A673 (cell line): ENCODE measurements at regions of chr2 and their contacts with region 1.

Region 1: GRCh38 chr2:12716282-12717190 is at the start of gene TRIB2:
- DNase-seq: peak; percentile 95
- H3K4me3 ChIP-seq: peak within 1 kb of the TSS; percentile 87
- H3K27ac ChIP-seq: peak within 1 kb of the TSS; percentile 91
- H3K4me1 ChIP-seq: peaks cover 31% of the 10 kb centered on the region
- H3K27me3 ChIP-seq: no peaks in the 10 kb centered on the region
- CTCF ChIP-seq: 0 out of 2 replicates have a peak, but pooled peaks have one; percentile 10
- total RNA-seq, gene TRIB2: 92.3 and 100.0 TPM in 2 replicates

Region 2: GRCh38 chr2:11829947-11830707 is 886.4 kb before region 1 on chr2:
- CTCF ChIA-PET with region 1: interaction called, 13 read pairs
- POLR2A ChIA-PET with region 1: no interaction called
- intact Hi-C with region 1: loop called (anchors 1 kb)
- DNase-seq: peak; percentile 99
- H3K4me3 ChIP-seq: peak overlapping the region; percentile 37
- H3K27ac ChIP-seq: peak overlapping the region; percentile 99
- H3K4me1 ChIP-seq: peaks cover 42% of the 10 kb centered on the region
- H3K27me3 ChIP-seq: no peaks in the 10 kb centered on the region
- CTCF ChIP-seq: peak; percentile 67

Region 3: DNA sequence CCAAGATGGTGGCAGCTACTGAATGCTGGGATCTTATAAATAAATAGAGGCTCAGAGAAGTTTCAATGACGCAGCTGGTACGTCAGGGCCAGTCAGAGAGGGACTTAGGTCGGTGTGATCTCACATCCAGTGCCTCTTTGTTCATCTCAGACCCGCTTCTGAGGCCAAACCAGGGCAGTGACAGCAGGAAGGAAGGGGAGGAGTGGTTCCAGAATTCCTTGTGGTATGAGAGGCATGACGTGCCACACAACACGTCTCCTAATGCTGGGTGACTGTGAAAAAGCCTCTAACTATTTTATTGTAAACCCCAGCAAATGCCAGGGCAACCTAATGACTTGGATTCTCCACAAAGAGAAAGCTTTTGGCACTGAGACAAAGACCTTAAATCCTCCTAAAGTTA is 546.8 kb before region 1 on chr2:
- CTCF ChIA-PET with region 1: no interaction called
- POLR2A ChIA-PET with region 1: no interaction called
- intact Hi-C with region 1: loop called (anchors 5 kb)
- DNase-seq: peak; percentile 78
- H3K4me3 ChIP-seq: no peak overlapping the region
- H3K27ac ChIP-seq: peak overlapping the region; percentile 88
- H3K4me1 ChIP-seq: peaks cover 21% of the 10 kb centered on the region
- H3K27me3 ChIP-seq: no peaks in the 10 kb centered on the region
- CTCF ChIP-seq: no peak

Region 4: DNA sequence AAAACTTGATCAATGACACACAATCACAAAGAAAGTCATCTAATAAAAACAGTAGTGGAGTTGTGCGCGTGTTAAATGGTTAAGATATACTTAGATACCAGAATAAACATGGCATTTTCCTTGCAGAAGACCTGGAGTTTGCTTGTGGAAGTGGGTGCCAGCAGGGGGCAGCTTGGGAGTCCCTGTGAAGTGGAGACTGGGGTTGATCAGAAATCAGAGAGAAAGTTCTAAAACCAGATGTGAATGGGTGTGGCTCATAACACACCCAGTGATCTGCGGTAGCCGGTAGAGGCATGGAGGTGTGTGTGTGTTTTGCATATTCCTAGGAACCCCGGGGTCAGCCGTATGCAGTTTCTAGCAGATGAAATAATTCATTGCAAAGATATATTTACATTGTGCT is 299.9 kb before region 1 on chr2:
- CTCF ChIA-PET with region 1: no interaction called
- POLR2A ChIA-PET with region 1: no interaction called
- intact Hi-C with region 1: loop called (anchors 1 kb)
- DNase-seq: peak; percentile 58
- H3K4me3 ChIP-seq: no peak overlapping the region
- H3K27ac ChIP-seq: no peak overlapping the region
- H3K4me1 ChIP-seq: no peaks in the 10 kb centered on the region
- H3K27me3 ChIP-seq: no peaks in the 10 kb centered on the region
- CTCF ChIP-seq: peak; percentile 62

Region 5: DNA sequence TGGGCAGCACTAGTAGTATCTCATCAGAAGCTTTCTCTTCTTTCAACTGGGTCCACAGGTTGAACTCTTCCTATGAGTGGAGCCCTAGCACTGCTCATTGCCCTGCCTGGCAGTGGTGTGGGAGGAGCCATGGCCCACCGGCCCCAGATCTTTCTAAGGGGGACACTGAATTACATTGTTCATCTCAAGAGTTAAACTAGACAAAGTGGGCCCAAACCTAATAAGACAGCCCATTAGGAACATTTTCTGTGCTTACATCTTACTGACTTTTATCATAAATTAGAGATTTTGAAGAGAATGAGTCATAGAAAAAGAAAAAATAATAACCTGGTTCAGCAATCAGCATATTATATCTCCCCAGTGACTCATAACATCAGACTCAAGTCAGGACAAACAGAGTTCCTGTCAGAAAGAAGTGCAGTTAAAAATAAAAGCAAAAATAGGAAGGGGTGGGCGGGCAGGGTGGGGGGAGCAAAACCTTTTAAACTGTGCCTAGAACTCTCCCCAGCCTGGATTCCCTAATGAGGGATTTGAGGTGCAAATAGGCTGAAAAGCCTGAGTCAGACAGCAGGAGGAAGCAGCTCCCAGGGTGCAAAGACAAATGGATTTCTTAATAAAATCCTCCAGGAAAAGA is 161.4 kb before region 1 on chr2:
- CTCF ChIA-PET with region 1: interaction called, 10 read pairs
- POLR2A ChIA-PET with region 1: no interaction called
- intact Hi-C with region 1: loop called (anchors 1 kb)
- DNase-seq: peak; percentile 94
- H3K4me3 ChIP-seq: no peak overlapping the region
- H3K27ac ChIP-seq: peak overlapping the region; percentile 75
- H3K4me1 ChIP-seq: peaks cover 28% of the 10 kb centered on the region
- H3K27me3 ChIP-seq: no peaks in the 10 kb centered on the region
- CTCF ChIP-seq: peak; percentile 32; the same call in 1 of the 2 replicates

Region 6: GRCh38 chr2:12787891-12788801 is 71.6 kb after region 1 on chr2:
- CTCF ChIA-PET with region 1: no interaction called
- POLR2A ChIA-PET with region 1: no interaction called
- intact Hi-C with region 1: no loop called
- DNase-seq: no peak
- H3K4me3 ChIP-seq: no peak overlapping the region
- H3K27ac ChIP-seq: no peak overlapping the region
- H3K4me1 ChIP-seq: no peaks in the 10 kb centered on the region
- H3K27me3 ChIP-seq: no peaks in the 10 kb centered on the region
- CTCF ChIP-seq: no peak

Region 7: GRCh38 chr2:12855508-12856435 is 139.2 kb after region 1 on chr2:
- CTCF ChIA-PET with region 1: interaction called, 10 read pairs
- POLR2A ChIA-PET with region 1: no interaction called
- intact Hi-C with region 1: no loop called
- DNase-seq: no peak
- H3K4me3 ChIP-seq: no peak overlapping the region
- H3K27ac ChIP-seq: no peak overlapping the region
- H3K4me1 ChIP-seq: no peaks in the 10 kb centered on the region
- H3K27me3 ChIP-seq: no peaks in the 10 kb centered on the region
- CTCF ChIP-seq: no peak